A673 (cell line): ENCODE measurements at regions of chr1 and their contacts with region 1.

Region 1: GRCh38 chr1:93061895-93062792 is 16.9 kb upstream of the MTF2 start:
- DNase-seq: peak; percentile 58
- H3K4me3 ChIP-seq: no peak overlapping the region
- H3K27ac ChIP-seq: no peak overlapping the region
- H3K4me1 ChIP-seq: no peaks in the 10 kb centered on the region
- H3K27me3 ChIP-seq: peaks cover 4% of the 10 kb centered on the region
- CTCF ChIP-seq: peak; percentile 70

Region 2: GRCh38 chr1:92701147-92701546 is 361.0 kb before region 1 on chr1:
- CTCF ChIA-PET with region 1: no interaction called
- POLR2A ChIA-PET with region 1: no interaction called
- intact Hi-C with region 1: no loop called
- DNase-seq: no peak
- H3K4me3 ChIP-seq: no peak overlapping the region
- H3K27ac ChIP-seq: peak overlapping the region; percentile 15
- H3K4me1 ChIP-seq: peaks cover 16% of the 10 kb centered on the region
- H3K27me3 ChIP-seq: no peaks in the 10 kb centered on the region
- CTCF ChIP-seq: no peak

Region 3: DNA sequence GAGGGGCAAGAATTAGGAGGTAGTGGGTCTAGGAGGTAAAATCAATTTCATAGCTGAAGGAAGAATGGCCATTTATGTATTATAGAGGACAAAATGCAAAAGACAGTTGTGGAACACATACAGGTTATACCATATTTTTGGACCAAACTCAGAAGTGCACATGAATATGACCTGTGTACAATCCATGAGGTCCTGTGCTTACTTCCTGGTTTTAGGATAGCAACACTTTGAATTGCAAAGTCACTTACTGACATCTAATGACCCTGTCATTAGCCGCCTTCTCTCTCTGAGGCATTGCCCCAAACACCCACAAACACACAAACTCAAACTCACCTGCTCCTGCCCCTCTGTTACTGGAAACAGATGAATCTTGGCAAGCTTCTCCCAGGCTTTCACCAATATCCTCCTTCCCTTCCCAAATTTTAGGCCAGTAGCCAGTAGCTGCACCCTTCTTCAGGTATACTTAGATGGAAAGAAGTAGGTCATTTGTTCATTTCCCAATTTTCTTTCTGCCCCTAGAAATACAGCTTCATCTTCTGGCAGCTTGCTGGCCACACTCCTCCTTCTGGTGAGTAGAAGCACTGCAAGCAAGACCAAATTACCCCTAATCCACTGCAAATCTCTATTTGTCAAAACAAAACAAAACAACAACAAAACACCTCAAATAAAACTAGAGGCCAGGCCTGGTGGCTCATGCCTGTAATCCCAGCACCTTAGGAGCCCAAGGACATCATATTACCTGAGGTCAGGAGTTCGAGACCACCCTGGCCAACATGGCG is 244.0 kb before region 1 on chr1:
- CTCF ChIA-PET with region 1: no interaction called
- POLR2A ChIA-PET with region 1: no interaction called
- intact Hi-C with region 1: no loop called
- DNase-seq: peak; percentile 37
- H3K4me3 ChIP-seq: no peak overlapping the region
- H3K27ac ChIP-seq: no peak overlapping the region
- H3K4me1 ChIP-seq: no peaks in the 10 kb centered on the region
- H3K27me3 ChIP-seq: no peaks in the 10 kb centered on the region
- CTCF ChIP-seq: peak; percentile 81

Region 4: GRCh38 chr1:92968138-92969032 is 93.8 kb before region 1 on chr1:
- CTCF ChIA-PET with region 1: no interaction called
- POLR2A ChIA-PET with region 1: no interaction called
- intact Hi-C with region 1: loop called (anchors 1 kb)
- DNase-seq: peak; percentile 45
- H3K4me3 ChIP-seq: no peak overlapping the region
- H3K27ac ChIP-seq: no peak overlapping the region
- H3K4me1 ChIP-seq: peaks cover 15% of the 10 kb centered on the region
- H3K27me3 ChIP-seq: no peaks in the 10 kb centered on the region
- CTCF ChIP-seq: peak; percentile 59

Region 5: GRCh38 chr1:93021539-93022134 is 40.5 kb before region 1 on chr1:
- CTCF ChIA-PET with region 1: no interaction called
- POLR2A ChIA-PET with region 1: no interaction called
- intact Hi-C with region 1: loop called (anchors 2 kb)
- DNase-seq: peak; percentile 74
- H3K4me3 ChIP-seq: no peak overlapping the region
- H3K27ac ChIP-seq: no peak overlapping the region
- H3K4me1 ChIP-seq: peaks cover 19% of the 10 kb centered on the region
- H3K27me3 ChIP-seq: no peaks in the 10 kb centered on the region
- CTCF ChIP-seq: peak; percentile 86

Region 6: GRCh38 chr1:93275634-93276295 is 213.6 kb after region 1 on chr1:
- CTCF ChIA-PET with region 1: no interaction called
- POLR2A ChIA-PET with region 1: no interaction called
- intact Hi-C with region 1: no loop called
- DNase-seq: no peak
- H3K4me3 ChIP-seq: no peak overlapping the region
- H3K27ac ChIP-seq: no peak overlapping the region
- H3K4me1 ChIP-seq: no peaks in the 10 kb centered on the region
- H3K27me3 ChIP-seq: no peaks in the 10 kb centered on the region
- CTCF ChIP-seq: no peak

Region 7: DNA sequence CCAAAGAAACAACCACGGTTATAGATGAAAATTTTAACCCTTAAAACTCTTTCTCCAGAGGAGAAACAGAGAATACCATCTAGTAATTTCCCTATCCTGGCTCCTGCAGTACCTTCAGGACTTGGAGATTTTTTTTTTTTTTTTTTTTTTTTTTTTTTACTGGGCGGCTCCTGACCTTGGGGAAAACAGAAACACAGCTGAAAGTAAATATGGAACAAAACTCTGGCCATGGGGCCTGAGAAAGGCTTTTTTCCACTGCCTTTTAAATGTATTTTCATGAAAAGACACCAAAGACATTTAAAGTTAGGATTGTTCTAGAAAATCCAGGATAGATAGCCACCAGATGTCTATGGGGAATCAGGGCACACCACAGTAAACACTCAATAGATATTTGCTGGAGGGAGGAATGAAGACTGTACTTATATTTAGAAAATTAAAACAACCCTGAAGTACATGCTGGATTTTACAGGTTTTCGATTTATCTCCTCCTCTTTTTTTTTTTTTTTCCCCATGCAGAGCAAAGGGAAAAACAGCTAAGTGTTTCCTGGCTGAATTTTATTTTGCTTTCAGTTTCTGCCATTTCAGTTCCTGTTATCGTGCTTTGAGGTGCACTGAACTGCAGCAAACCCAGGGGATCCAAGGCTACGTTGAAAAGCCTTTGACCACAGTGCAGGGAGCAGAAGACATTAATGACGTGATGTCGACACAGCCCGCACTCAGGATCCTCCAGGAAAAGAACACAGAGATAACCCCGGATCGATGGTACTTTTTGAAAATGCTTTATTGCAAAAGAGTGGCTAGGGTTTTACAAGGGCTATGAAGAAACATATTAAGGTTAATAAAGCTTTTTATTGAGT is 1900.5 kb after region 1 on chr1:
- CTCF ChIA-PET with region 1: no interaction called
- POLR2A ChIA-PET with region 1: interaction called, 11 read pairs
- intact Hi-C with region 1: no loop called
- DNase-seq: no peak
- H3K4me3 ChIP-seq: no peak overlapping the region
- H3K27ac ChIP-seq: no peak overlapping the region
- H3K4me1 ChIP-seq: no peaks in the 10 kb centered on the region
- H3K27me3 ChIP-seq: no peaks in the 10 kb centered on the region
- CTCF ChIP-seq: no peak